ENCODE measurements at regions of chr6 and their contacts with region 1.

Region 1: DNA sequence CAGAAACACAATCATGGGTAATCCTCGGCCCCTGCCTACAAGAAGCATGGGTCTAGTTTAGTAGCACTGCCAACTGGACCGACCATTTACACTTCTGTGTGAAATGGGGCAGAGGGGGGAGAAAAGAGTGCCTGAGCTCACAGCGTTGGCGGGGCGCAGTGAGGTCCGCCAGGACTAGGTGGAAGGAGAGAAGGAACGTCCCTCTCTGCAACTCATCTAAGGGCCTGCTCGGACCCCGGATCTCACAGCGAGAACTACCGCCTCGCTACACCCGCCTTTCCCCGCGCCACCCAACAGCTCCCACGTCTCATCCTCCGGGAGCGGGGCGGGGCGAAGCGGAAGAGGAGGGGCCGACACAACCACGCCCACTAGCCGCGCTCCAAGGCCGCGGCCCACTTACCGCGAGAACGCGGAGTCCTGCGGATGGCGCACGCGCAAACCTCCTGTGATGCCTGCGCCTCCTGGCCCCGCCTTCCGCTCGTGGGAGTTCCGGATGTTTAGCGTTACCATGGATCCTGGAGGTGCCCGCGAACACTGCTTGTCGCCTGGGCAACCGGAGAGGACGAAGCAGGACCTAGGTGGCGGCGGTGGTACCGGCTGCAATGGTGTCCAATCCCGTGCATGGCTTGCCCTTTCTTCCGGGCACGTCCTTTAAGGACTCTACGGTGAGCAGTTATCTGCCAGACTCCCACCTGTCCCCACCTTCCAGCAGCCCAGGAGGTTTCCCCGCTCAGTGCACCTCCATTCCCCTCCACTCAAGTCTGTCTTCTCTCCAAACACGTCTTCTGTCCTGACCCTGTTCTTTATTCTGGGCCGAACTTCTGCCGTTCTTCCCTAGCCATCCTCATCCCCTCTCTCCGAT is at the start of gene EFHC1:
- DNase-seq: peak; percentile 99 to 100 (median 100)
- ATAC-seq: peak; percentile 97 to 98
- H3K4me3 ChIP-seq: peak within 1 kb of the TSS; percentile 70
- H3K27ac ChIP-seq: peak within 1 kb of the TSS; percentile 82
- H3K4me1 ChIP-seq: no peaks in the 10 kb centered on the region
- H3K27me3 ChIP-seq: no peaks in the 10 kb centered on the region
- total RNA-seq, gene EFHC1: 9.0 to 10.5 (median 10.0) TPM

Region 2: GRCh38 chr6:52049252-52050050 is 370.6 kb before region 1 on chr6:
- intact Hi-C with region 1: no loop called
- DNase-seq: no peak
- ATAC-seq: no peak
- H3K4me3 ChIP-seq: no peak overlapping the region
- H3K27ac ChIP-seq: no peak overlapping the region
- H3K4me1 ChIP-seq: no peaks in the 10 kb centered on the region
- H3K27me3 ChIP-seq: no peaks in the 10 kb centered on the region

Region 3: DNA sequence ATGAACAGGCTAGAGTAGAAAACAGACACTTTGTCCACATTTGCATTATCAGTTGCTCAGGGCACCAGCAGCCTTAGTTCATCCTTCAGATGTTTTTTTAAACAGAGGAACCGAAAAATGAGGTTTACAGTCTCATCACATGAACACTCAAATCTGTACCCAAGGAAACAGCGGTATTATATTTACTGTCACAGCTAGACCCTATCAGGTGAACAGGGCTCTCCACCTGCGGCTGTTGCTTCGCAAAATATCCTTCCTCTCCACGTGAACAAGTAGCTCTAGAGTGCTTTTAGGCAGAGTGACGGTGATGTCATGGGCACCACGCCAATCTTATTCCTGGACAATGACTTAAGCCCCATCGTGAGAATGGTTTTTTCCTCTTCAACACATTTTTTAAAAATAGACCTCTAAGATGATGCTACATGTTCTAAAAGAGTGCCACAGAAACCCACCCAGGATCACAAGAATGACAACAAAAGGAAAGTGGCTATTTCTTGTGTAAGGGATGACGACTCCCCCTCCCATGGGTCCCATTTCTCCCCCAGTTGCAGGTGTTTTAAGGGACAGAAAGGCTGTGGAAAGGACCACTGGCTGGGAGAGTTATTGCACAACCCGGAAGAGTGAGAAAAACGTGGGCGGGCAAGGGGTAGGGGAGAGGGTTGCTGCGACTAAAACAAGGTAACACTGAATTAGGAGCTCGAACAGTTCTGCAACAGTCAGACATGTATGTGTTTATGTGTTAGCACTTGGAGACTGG is 77.8 kb after region 1 on chr6:
- intact Hi-C with region 1: loop called (anchors 2 to 10 kb)
- DNase-seq: peak; percentile 49 to 70 (median 63)
- ATAC-seq: peak; percentile 13 to 54
- H3K4me3 ChIP-seq: no peak overlapping the region
- H3K27ac ChIP-seq: peak overlapping the region; percentile 91
- H3K4me1 ChIP-seq: peaks cover 8% of the 10 kb centered on the region
- H3K27me3 ChIP-seq: no peaks in the 10 kb centered on the region

Region 4: GRCh38 chr6:52503848-52504781 is 84.1 kb after region 1 on chr6:
- intact Hi-C with region 1: loop called (anchors 2 to 10 kb)
- DNase-seq: peak; percentile 92 to 94 (median 94)
- ATAC-seq: peak; percentile 89 to 93
- H3K4me3 ChIP-seq: no peak overlapping the region
- H3K27ac ChIP-seq: peak overlapping the region; percentile 58
- H3K4me1 ChIP-seq: peaks cover 13% of the 10 kb centered on the region
- H3K27me3 ChIP-seq: no peaks in the 10 kb centered on the region

Region 5: DNA sequence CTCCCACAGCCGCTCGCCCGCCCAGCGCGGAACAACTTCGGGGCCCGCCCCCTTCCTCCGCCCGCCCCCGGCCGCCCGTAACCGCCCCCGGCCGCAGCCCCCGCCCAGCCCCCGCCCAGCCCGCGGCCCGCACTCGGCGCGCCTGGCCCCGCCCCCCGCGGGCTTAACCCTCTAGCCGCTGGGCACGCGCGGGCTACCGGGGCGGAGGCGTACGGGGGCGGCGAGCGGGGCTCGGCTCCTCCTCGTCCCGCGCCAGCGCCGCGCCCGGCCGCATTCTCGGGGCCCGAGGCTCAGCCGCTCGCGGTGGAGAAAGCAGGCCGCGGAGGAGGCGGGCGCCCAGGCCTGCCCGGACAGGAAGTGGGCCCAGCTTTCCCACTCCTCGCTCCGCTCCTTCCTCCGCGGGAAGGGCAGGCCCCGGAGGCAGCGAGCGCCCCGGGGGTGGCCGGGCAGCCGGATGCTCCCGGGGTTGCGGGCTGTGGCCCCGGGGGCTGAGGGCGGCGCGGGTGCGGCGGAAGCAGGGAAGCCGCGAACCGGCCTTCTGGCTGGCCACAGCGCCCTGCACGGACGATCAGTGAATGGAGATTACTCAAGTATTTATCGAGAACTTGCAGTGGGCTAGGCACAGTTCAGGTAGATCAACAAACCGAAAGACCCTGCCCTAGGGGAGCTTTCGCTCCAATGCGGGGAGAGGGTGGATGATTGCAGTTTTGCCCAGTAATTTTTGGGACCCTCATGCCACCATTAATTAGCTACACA is 157.2 kb after region 1 on chr6 and contains the start of gene TRAM2:
- intact Hi-C with region 1: loop called in 3 of 4 experiments (anchors 5 to 10 kb)
- DNase-seq: peak; percentile 90 to 97 (median 95)
- ATAC-seq: peak; percentile 89 to 91
- H3K4me3 ChIP-seq: peak within 1 kb of the TSS; percentile 83
- H3K27ac ChIP-seq: peak within 1 kb of the TSS; percentile 93
- H3K4me1 ChIP-seq: peaks cover 23% of the 10 kb centered on the region
- H3K27me3 ChIP-seq: no peaks in the 10 kb centered on the region
- total RNA-seq, gene TRAM2: 14.5 to 18.2 (median 15.2) TPM

Region 6: GRCh38 chr6:52584203-52584602 is 164.2 kb after region 1 on chr6:
- intact Hi-C with region 1: loop called in 2 of 4 experiments (anchors 5 to 10 kb)
- DNase-seq: no peak
- ATAC-seq: no peak
- H3K4me3 ChIP-seq: no peak overlapping the region
- H3K27ac ChIP-seq: no peak overlapping the region
- H3K4me1 ChIP-seq: no peaks in the 10 kb centered on the region
- H3K27me3 ChIP-seq: no peaks in the 10 kb centered on the region

Region 7: DNA sequence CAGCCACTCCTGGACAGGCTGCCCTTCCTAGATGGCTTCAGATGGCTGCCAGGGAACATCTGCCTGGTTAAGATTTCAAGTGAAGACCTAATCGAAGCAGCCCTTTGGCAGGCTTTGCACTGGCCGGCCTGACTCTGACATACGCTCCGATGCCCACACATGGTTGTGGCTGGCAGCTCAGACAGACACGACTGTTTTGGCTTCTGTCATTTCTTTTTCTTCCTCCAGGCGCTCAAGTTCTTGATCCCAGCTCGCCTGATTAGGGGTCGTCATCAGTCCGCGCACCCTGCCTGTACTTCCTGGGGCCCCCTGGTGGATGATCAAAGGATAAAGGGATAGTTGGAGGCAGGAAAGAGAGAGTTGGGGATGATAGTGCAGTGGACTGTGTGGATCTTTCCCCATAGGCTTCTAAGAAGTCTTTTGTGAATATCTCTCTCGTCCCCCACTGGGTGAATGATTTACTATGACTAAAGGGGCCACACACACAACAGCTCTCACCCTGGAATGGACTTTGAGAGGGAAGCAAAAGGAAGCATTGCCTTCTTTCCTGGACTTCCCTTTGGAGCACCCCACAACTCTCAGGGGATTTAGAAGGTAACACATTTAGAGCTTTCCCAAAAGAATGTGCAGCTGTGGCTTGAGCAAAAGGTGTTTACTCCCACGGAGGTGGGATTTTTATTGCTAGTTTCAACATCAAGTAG is 178.2 kb after region 1 on chr6:
- intact Hi-C with region 1: loop called (anchors 2 to 5 kb)
- DNase-seq: peak; percentile 73 to 83 (median 82)
- ATAC-seq: peak; percentile 62 to 77
- H3K4me3 ChIP-seq: peak overlapping the region; percentile 7
- H3K27ac ChIP-seq: no peak overlapping the region
- H3K4me1 ChIP-seq: peaks cover 10% of the 10 kb centered on the region
- H3K27me3 ChIP-seq: no peaks in the 10 kb centered on the region

Region 8: DNA sequence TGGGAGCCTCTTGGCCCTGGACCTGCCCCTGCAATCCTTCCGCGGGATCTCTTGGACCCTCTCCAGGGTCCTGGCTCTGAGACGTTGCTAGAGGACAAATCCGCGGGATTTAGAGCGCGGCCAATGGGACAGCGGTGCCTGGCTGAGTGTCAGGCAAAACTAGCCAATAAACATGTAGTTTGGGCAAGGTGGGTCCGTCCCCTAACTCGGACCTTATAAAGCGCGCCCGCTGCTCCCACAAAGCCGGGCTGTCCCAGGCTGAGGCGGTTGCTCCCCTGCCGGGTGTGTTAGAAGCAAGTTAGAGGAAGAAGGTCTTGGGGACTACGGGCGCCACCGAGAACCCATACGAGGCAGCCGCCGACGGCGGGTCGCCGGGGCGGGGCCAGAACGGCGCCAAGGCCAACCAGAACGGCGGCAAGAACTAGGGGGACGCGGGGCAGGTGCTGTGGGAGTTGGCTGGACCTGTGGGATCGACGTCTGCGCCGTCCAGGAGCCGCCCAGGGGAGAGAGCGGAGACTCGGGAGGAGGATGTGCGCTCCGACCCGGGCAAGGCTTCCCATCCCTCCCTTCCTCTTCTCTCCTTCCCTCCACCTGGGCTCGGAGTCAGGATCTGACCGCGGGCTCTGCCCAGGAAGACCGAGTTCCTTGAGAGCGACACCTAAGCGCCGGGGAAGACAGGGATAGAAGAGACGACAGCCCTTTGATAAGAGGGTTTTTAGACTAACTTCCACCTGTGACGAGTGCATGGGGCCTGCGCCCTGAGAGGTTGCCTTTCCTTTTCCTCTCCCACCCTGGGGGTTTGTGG is 244.3 kb after region 1 on chr6:
- intact Hi-C with region 1: loop called in 3 of 4 experiments (anchors 2 to 5 kb)
- DNase-seq: peak; percentile 89 to 96 (median 94)
- ATAC-seq: peak; percentile 99
- H3K4me3 ChIP-seq: peak overlapping the region; percentile 87
- H3K27ac ChIP-seq: peak overlapping the region; percentile 71
- H3K4me1 ChIP-seq: peaks cover 8% of the 10 kb centered on the region
- H3K27me3 ChIP-seq: no peaks in the 10 kb centered on the region

Region 9: GRCh38 chr6:53926525-53926924 is 1506.5 kb after region 1 on chr6:
- intact Hi-C with region 1: no loop called
- DNase-seq: no peak
- ATAC-seq: no peak
- H3K4me3 ChIP-seq: no peak overlapping the region
- H3K27ac ChIP-seq: no peak overlapping the region
- H3K4me1 ChIP-seq: peaks cover 2% of the 10 kb centered on the region
- H3K27me3 ChIP-seq: no peaks in the 10 kb centered on the region

Measured in right cardiac atrium (tissue), 5 donors.